CD4-positive, alpha-beta memory T cell (primary cell): ENCODE measurements at regions of chr6 and their contacts with region 1.

Region 1: DNA sequence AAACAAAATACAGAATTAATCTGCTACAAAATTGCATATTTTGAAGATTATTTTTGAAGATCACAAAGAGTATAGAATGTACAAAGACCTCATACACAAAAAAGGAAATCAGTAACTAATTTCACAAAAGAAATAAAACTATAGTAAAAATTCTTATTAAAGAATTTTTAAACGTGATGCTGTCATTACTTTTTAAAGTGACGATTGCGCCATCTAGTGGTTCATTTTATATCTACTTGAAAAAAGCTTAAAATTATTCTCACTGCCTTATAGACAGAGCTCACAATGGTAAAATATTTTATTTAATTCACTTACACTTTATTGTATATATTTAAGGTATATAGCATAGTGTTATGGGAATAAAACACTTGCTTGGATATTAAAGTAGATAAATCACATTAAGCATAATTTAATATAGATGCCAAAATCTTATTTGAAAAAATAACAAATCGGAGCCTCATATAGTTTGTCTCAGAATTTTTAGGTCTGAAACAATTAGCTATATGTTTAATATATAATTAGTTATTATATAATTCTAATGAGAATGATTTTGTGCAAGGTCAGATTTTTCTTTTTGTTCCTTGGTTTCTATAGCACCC is 128.8 kb downstream of the PHF3 start:
- DNase-seq: peak in 4 of 5 donors; percentile 36 to 53 (median 44)
- H3K4me3 ChIP-seq: no peak overlapping the region
- H3K4me3 Mint-ChIP-seq: no peak overlapping the region
- H3K27ac ChIP-seq: no peak overlapping the region
- H3K27ac Mint-ChIP-seq: no peak overlapping the region
- H3K4me1 ChIP-seq: no peaks in the 10 kb centered on the region
- H3K4me1 Mint-ChIP-seq: no peaks in the 10 kb centered on the region
- H3K27me3 ChIP-seq: no peaks in the 10 kb centered on the region
- H3K27me3 Mint-ChIP-seq: peaks cover 6 to 14% of the 10 kb centered on the region in 2 donors

Region 2: GRCh38 chr6:63352587-63353285 is 411.7 kb before region 1 on chr6:
- CTCF ChIA-PET with region 1: interaction called, 3 read pairs
- POLR2A ChIA-PET with region 1: no interaction called
- intact Hi-C with region 1: loop called (anchors 1 kb)
- DNase-seq: no peak
- H3K4me3 ChIP-seq: no peak overlapping the region
- H3K4me3 Mint-ChIP-seq: peak overlapping the region in 1 of 8 donors; percentile 36
- H3K27ac ChIP-seq: no peak overlapping the region
- H3K27ac Mint-ChIP-seq: peak overlapping the region in 1 of 7 donors; percentile 30
- H3K4me1 ChIP-seq: peaks cover 7% of the 10 kb centered on the region
- H3K4me1 Mint-ChIP-seq: peaks cover 1 to 9% (median 8%) of the 10 kb centered on the region in 4 donors
- H3K27me3 ChIP-seq: no peaks in the 10 kb centered on the region
- H3K27me3 Mint-ChIP-seq: peaks cover 0 to 2% of the 10 kb centered on the region in 2 donors

Region 3: GRCh38 chr6:63504777-63505384 is 259.5 kb before region 1 on chr6:
- CTCF ChIA-PET with region 1: interaction called, 4 read pairs
- POLR2A ChIA-PET with region 1: no interaction called
- intact Hi-C with region 1: loop called (anchors 10 kb)
- DNase-seq: no peak
- H3K4me3 ChIP-seq: no peak overlapping the region
- H3K4me3 Mint-ChIP-seq: no peak overlapping the region
- H3K27ac ChIP-seq: no peak overlapping the region
- H3K27ac Mint-ChIP-seq: no peak overlapping the region
- H3K4me1 ChIP-seq: no peaks in the 10 kb centered on the region
- H3K4me1 Mint-ChIP-seq: no peaks in the 10 kb centered on the region
- H3K27me3 ChIP-seq: no peaks in the 10 kb centered on the region
- H3K27me3 Mint-ChIP-seq: peaks cover under 1 to 3% of the 10 kb centered on the region in 2 donors

Region 4: GRCh38 chr6:63571881-63572732 is 192.3 kb before region 1 on chr6 and contains the starts of genes LOC128125822 and PTP4A1:
- CTCF ChIA-PET with region 1: interaction called, 16 read pairs
- POLR2A ChIA-PET with region 1: no interaction called
- intact Hi-C with region 1: loop called (anchors 1 kb)
- DNase-seq: peak; percentile 95 to 97 (median 97)
- H3K4me3 ChIP-seq: peak within 1 kb of the TSS; percentile 52 to 71
- H3K4me3 Mint-ChIP-seq: peak within 1 kb of the TSS; percentile 89 to 98 (median 96)
- H3K27ac ChIP-seq: peak within 1 kb of the TSS; percentile 92
- H3K27ac Mint-ChIP-seq: peak within 1 kb of the TSS; percentile 95 to 99 (median 97)
- H3K4me1 ChIP-seq: peaks cover 27% of the 10 kb centered on the region
- H3K4me1 Mint-ChIP-seq: peaks cover 21 to 49% (median 28%) of the 10 kb centered on the region in 4 donors
- H3K27me3 ChIP-seq: no peaks in the 10 kb centered on the region
- H3K27me3 Mint-ChIP-seq: peaks cover 0 to 1% of the 10 kb centered on the region in 2 donors
- total RNA-seq, gene PTP4A1: 22.6 to 30.3 TPM

Region 5: GRCh38 chr6:63677282-63677681 is 87.1 kb before region 1 on chr6:
- CTCF ChIA-PET with region 1: no interaction called
- POLR2A ChIA-PET with region 1: no interaction called
- intact Hi-C with region 1: no loop called
- DNase-seq: no peak
- H3K4me3 ChIP-seq: no peak overlapping the region
- H3K4me3 Mint-ChIP-seq: no peak overlapping the region
- H3K27ac ChIP-seq: no peak overlapping the region
- H3K27ac Mint-ChIP-seq: no peak overlapping the region
- H3K4me1 ChIP-seq: peaks cover 76% of the 10 kb centered on the region
- H3K4me1 Mint-ChIP-seq: peaks cover 33 to 39% (median 37%) of the 10 kb centered on the region in 4 donors
- H3K27me3 ChIP-seq: no peaks in the 10 kb centered on the region
- H3K27me3 Mint-ChIP-seq: no peaks in the 10 kb centered on the region